Heart left ventricle (tissue), 16 donors: ENCODE measurements at regions of chr15 and their contacts with region 1.

Region 1: DNA sequence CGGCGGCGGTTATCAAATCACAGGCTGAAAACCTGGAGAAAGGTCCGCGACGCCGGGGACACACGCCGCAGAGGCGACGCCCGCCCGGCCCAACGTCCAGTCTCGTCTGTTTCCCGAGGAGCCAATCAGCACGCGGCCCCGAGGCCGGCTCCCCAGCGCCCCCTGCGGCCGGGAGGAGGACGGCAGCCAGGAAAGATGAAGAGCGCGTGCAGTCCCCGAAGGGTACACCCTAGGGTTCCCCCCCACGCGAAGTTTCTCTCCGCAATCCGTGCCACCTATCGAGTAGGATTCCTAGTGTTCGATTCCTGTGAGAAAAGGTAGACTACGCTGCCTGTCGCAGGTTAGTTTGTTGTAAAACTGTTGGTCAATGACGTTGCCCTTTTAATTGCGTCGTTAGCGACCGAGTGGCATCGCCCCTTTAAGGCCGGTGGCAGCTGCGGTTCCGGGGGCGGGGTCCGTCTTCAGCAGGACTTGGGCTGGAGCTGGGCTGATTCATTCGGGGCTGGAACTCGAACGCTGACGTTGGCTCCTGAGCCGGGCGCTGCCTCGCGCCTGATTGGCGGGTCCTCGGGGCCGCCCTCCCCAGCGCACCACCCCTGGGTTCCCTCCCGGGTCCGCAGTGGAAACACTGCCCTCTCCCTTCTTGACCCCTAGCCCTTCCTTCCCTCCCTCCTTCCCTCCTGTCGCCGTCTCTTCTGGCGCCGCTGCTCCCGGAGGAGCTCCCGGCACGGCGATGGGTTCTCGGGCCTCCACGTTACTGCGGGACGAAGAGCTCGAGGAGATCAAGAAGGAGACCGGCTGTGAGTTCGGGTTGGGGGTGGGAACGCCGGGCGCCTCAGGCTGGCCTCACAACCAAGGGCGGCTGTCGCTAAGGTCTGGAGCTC is at the starts of genes CHP1 and EXD1:
- DNase-seq: peak; percentile 99
- ATAC-seq: peak; percentile 100
- H3K4me3 ChIP-seq: peak within 1 kb of the TSS; percentile 59 to 94 (median 81)
- H3K27ac ChIP-seq: peak within 1 kb of the TSS; percentile 83 to 95 (median 91)
- H3K4me1 ChIP-seq: peaks cover 0 to 34% (median 26%) of the 10 kb centered on the region in 12 donors
- H3K27me3 ChIP-seq: no peaks in the 10 kb centered on the region
- CTCF ChIP-seq: peak; percentile 88 to 99 (median 96)
- POLR2A ChIP-seq: peak in 1 of 2 donors; percentile 78
- total RNA-seq, gene CHP1: 102 to 232 (median 119) TPM
- total RNA-seq, gene EXD1: not detected

Region 2: DNA sequence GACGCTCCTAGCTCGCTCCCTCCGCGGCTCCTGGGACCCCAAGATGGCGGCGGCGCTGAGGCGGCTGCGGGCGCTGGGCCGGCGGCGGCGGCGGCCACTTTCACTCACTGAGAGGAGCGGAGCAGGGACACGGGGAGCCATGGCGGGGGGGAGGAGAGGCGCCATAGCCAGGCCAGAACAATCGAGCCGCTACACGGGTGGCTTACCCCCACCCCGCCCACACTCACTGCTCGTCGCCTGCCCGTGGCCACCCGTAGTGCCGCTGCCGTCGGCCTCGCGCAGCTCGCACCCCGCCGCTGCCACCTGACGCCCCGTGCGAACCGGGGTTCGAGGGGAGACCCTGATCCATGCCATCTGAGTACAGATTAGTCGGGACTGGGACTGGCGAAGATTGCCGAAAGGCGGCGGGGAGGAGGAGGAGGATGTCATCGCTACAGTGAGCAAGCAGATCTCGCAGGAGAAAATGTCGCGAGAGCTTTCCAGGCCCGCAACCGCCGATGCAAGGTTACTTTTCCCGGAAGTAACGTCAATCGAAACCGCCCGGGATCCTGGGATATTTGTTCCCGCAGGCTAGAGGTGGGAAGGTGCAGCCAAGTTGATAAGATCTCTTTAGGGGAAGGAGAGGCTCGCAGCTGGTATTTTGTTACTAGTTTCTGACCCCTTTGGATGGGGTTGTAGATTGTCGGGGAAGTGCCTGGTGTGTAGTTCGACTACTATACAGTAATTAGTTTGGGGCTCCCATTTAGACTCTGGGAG is 114.6 kb before region 1 on chr15 and contains the start of gene INO80:
- intact Hi-C with region 1: loop called in 6 of 10 experiments (anchors 1 to 5 kb)
- DNase-seq: peak; percentile 97 to 100 (median 99)
- ATAC-seq: peak; percentile 95 to 98 (median 96)
- H3K4me3 ChIP-seq: peak within 1 kb of the TSS; percentile 72 to 98 (median 84)
- H3K27ac ChIP-seq: peak within 1 kb of the TSS; percentile 91 to 100 (median 100)
- H3K4me1 ChIP-seq: peaks cover 0 to 24% (median 18%) of the 10 kb centered on the region in 12 donors
- H3K27me3 ChIP-seq: no peaks in the 10 kb centered on the region
- CTCF ChIP-seq: peak in 1 of 12 donors; percentile 18
- POLR2A ChIP-seq: peak in 1 of 2 donors; percentile 77
- total RNA-seq, gene INO80: 9.7 to 20.9 (median 12.6) TPM

Region 3: DNA sequence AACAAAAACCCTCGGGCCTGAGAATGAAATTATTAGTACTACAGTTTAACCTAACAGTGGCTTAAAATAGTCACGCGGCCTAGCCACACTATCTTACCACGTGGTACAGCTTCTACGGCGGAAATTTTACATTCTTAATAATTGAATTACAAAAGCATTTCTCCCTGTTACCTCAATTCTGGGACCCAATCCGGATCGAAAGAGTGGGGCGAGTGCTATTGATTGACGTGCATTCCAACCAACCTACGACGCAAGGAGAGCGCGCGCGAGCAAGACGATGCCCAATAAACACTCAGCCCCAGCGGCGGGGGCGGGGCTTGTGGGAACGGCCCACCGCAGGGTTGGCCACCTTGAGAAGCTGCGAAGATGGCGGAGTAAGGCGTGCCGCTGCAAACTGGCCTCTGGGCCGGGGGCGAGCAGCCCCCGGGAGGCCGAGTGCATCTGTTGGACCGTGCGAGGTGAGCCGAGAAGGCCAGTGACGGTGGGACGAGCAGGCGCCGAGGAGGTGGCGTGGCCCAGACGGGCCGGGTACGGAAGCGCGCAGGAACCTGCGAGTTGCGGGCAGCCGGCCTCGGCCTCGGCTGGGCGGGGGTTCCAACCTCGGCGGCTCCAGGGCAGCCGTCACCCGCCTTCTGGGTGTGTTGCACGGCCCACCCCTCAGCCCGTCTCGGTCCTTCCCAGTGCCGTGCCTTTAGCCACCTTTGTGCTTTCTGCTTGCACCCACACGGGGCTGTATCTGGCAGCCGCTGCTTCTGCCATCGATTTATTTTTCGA is 52.9 kb after region 1 on chr15:
- intact Hi-C with region 1: loop called in 8 of 10 experiments (anchors 1 to 10 kb)
- DNase-seq: peak; percentile 98 to 99 (median 99)
- ATAC-seq: peak; percentile 99 to 100 (median 100)
- H3K4me3 ChIP-seq: peak overlapping the region; percentile 52 to 99 (median 87)
- H3K27ac ChIP-seq: peak overlapping the region; percentile 83 to 99 (median 94)
- H3K4me1 ChIP-seq: peaks cover 3 to 47% (median 29%) of the 10 kb centered on the region in 12 donors
- H3K27me3 ChIP-seq: no peaks in the 10 kb centered on the region
- CTCF ChIP-seq: no peak
- POLR2A ChIP-seq: peak; percentile 64 to 94

Region 4: DNA sequence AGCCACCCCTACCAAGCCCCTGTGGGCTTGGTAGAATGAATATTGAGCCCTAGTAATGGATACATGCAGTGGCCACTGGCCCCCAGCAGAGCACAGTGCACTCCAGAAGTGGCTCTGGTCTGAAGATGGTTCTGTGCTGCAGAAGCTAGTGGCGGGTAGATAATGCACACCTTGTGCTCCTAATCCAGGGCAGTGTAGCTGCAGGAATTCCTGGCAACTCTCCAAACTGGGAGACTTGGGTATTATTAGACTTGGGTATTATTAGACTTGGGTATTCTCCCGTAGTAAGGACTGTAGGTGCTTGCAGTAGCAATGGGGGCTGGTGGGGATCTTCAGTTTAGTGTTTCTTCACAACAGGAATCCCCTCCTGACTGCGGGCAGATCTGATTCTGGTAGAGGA is 136.5 kb after region 1 on chr15:
- intact Hi-C with region 1: no loop called
- DNase-seq: peak in 2 of 5 donors; percentile 16 to 31
- ATAC-seq: peak; percentile 67 to 86 (median 76)
- H3K4me3 ChIP-seq: no peak overlapping the region
- H3K27ac ChIP-seq: no peak overlapping the region
- H3K4me1 ChIP-seq: peaks cover 0 to 7% (median 0%) of the 10 kb centered on the region in 12 donors
- H3K27me3 ChIP-seq: no peaks in the 10 kb centered on the region
- CTCF ChIP-seq: no peak
- POLR2A ChIP-seq: no peak